ENCODE measurements at regions of chr17 and their contacts with region 1.

Region 1: DNA sequence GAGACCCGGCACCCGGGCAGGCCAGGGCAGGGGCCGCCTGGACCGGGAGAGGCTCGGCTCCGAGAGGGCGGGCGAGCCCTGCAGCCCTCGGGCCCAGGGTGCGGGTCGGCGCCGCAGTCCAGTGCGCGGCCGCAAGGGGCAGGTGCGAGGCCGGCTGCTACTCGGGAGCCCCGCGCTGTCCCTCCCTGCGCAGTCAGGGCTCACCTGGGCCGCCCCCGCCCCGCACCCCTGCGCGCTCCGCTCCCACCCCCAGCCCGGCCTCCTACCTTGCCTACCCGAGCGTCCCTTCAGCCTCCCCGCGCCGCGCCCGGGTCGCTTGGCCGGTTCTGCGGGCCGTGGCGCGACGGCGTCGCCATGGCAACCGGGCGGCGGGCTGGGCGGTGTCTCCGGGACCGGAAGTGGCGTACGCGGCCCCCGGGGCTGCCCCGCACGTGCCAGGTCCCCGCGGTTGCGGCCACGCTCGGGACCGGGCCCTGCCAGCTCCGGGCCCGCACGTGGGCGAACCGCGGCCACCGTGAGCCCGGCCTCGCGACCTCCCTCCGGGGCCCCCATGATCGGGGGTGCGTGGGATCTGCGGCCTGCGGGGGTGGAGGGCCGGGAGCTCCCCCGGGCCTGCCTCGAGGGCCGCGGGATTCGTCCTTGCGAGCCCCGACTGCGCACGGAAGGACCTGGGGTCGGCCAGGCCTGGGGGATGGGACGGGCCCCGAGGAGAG is at the start of gene CYB561:
- DNase-seq: peak; percentile 74 to 81 (median 75)
- H3K4me3 ChIP-seq: peak within 1 kb of the TSS; percentile 67 to 73
- H3K4me3 Mint-ChIP-seq: peak within 1 kb of the TSS; percentile 80 to 89 (median 85)
- H3K27ac ChIP-seq: peak within 1 kb of the TSS; percentile 94
- H3K27ac Mint-ChIP-seq: peak within 1 kb of the TSS; percentile 91 to 98 (median 95)
- H3K4me1 ChIP-seq: peaks cover 48% of the 10 kb centered on the region
- H3K4me1 Mint-ChIP-seq: peaks cover 25 to 60% (median 43%) of the 10 kb centered on the region in 4 donors
- H3K27me3 ChIP-seq: no peaks in the 10 kb centered on the region
- H3K27me3 Mint-ChIP-seq: peaks cover 0 to 3% of the 10 kb centered on the region in 2 donors
- total RNA-seq, gene CYB561: 81.0 to 83.7 TPM

Region 2: GRCh38 chr17:63425482-63425881 is 20.7 kb before region 1 on chr17:
- CTCF ChIA-PET with region 1: interaction called, 98 read pairs
- POLR2A ChIA-PET with region 1: interaction called, 63 read pairs
- intact Hi-C with region 1: no loop called
- DNase-seq: peak; percentile 68 to 74 (median 72)
- H3K4me3 ChIP-seq: no peak overlapping the region
- H3K4me3 Mint-ChIP-seq: peak overlapping the region; percentile 32 to 82 (median 48)
- H3K27ac ChIP-seq: no peak overlapping the region
- H3K27ac Mint-ChIP-seq: peak overlapping the region in 5 of 7 donors; percentile 47 to 87 (median 67)
- H3K4me1 ChIP-seq: peaks cover 49% of the 10 kb centered on the region
- H3K4me1 Mint-ChIP-seq: peaks cover 26 to 54% (median 44%) of the 10 kb centered on the region in 4 donors
- H3K27me3 ChIP-seq: no peaks in the 10 kb centered on the region
- H3K27me3 Mint-ChIP-seq: no peaks in the 10 kb centered on the region

Region 3: GRCh38 chr17:63434876-63435684 is 11.1 kb before region 1 on chr17:
- CTCF ChIA-PET with region 1: interaction called, 98 read pairs
- POLR2A ChIA-PET with region 1: interaction called, 63 read pairs
- intact Hi-C with region 1: loop called (anchors 1 kb)
- DNase-seq: peak; percentile 70 to 82 (median 76)
- H3K4me3 ChIP-seq: no peak overlapping the region
- H3K4me3 Mint-ChIP-seq: peak overlapping the region in 7 of 8 donors; percentile 48 to 79 (median 65)
- H3K27ac ChIP-seq: no peak overlapping the region
- H3K27ac Mint-ChIP-seq: peak overlapping the region; percentile 86 to 97 (median 92)
- H3K4me1 ChIP-seq: peaks cover 56% of the 10 kb centered on the region
- H3K4me1 Mint-ChIP-seq: peaks cover 15 to 70% (median 41%) of the 10 kb centered on the region in 4 donors
- H3K27me3 ChIP-seq: no peaks in the 10 kb centered on the region
- H3K27me3 Mint-ChIP-seq: no peaks in the 10 kb centered on the region

Region 4: DNA sequence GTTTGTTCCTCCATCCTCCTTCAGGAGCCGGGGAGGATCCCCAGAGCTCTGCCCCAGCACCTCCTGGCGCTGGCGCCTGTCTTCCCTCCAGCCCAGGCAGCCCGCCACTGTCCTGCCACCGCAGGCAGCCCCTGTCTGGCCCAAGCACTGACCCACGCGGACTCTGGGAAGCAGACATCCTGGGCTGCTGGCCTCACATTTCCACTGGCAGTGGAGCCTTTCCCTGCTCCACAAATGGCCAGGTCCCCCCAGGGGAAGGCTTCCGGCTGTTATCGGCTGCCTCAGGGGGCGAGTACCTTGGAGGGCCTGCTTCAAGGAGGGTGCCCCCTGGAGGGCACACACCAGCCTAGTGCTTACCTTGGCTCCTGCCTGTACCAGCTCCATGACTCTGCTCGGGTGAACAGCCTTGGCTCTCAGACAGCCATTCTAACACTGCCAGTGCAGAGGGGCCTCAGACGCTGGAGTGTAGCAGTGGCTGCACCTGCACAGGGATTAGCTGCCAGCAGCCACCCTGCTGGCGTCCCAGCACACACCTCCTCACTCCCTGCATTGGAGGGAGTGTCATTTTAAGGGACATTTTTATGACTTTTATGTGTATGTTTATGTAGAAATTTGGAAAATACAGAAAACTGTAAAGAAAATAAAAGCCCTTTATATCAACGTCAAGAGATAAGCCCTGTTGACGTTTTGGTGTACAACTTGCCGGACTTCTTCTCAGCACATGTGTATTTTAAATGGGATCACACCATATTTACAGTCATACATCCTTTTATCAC is 51.8 kb after region 1 on chr17:
- CTCF ChIA-PET with region 1: no interaction called
- POLR2A ChIA-PET with region 1: no interaction called
- intact Hi-C with region 1: no loop called
- DNase-seq: no peak
- H3K4me3 ChIP-seq: no peak overlapping the region
- H3K4me3 Mint-ChIP-seq: no peak overlapping the region
- H3K27ac ChIP-seq: no peak overlapping the region
- H3K27ac Mint-ChIP-seq: no peak overlapping the region
- H3K4me1 ChIP-seq: no peaks in the 10 kb centered on the region
- H3K4me1 Mint-ChIP-seq: peaks cover 0 to 2% (median 0%) of the 10 kb centered on the region in 4 donors
- H3K27me3 ChIP-seq: no peaks in the 10 kb centered on the region
- H3K27me3 Mint-ChIP-seq: peaks cover 0 to 3% of the 10 kb centered on the region in 2 donors

Measured in CD4-positive, alpha-beta memory T cell (primary cell).